Activated CD4-positive, alpha-beta T cell treated with anti-CD3 and anti-CD28 coated beads, Interleukin-2, amount 10 ng/mL, durations not matched to agents 24 days and 14 days (primary cell): ENCODE measurements at regions of chr3 and their contacts with region 1.

Region 1: DNA sequence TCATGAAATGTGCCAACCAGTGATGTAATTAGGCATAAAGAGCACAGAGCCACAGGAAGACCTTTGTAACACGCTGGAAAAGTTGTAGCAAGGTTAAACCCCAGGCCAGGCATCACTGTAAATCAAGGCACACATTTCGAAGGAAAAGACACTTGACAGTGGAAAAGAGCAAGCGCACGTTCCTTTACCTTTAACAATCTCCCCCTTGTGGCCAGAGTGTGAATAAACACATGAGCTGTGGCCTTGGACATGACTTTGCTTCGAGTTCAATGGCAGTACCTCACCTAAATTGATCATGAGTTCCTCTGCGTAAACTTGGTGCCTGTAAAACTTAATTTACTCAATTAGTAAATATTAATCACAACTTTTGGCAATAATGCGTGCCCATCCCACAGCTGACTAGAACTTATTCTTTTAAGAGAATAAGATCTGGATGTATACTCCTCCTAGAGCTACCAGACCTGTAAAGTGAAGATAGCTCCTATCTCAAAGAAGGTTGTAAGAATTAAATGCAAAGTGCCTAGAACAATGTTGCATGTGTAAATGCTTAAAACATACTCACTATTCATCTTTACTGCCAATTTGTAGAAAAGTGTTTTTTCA is 757.0 kb upstream of the NECTIN3 start:
- DNase-seq: peak; percentile 86
- H3K4me3 Mint-ChIP-seq: no peak overlapping the region
- H3K27ac Mint-ChIP-seq: no peak overlapping the region
- H3K4me1 Mint-ChIP-seq: no peaks in the 10 kb centered on the region
- H3K27me3 Mint-ChIP-seq: peaks cover 4% of the 10 kb centered on the region

Region 2: GRCh38 chr3:109597444-109597843 is 717.2 kb before region 1 on chr3:
- intact Hi-C with region 1: no loop called
- DNase-seq: no peak
- H3K4me3 Mint-ChIP-seq: no peak overlapping the region
- H3K27ac Mint-ChIP-seq: no peak overlapping the region
- H3K4me1 Mint-ChIP-seq: no peaks in the 10 kb centered on the region
- H3K27me3 Mint-ChIP-seq: no peaks in the 10 kb centered on the region

Region 3: GRCh38 chr3:109731620-109732473 is 582.8 kb before region 1 on chr3:
- intact Hi-C with region 1: loop called (anchors 1 kb)
- DNase-seq: peak; percentile 86
- H3K4me3 Mint-ChIP-seq: no peak overlapping the region
- H3K27ac Mint-ChIP-seq: no peak overlapping the region
- H3K4me1 Mint-ChIP-seq: no peaks in the 10 kb centered on the region
- H3K27me3 Mint-ChIP-seq: no peaks in the 10 kb centered on the region